Naive thymus-derived CD4-positive, alpha-beta T cell (primary cell): ENCODE measurements at regions of chrX and their contacts with region 1.

Region 1: GRCh38 chrX:134460005-134460861 is at the start of gene HPRT1:
- DNase-seq: peak; percentile 57 to 80 (median 72)
- ATAC-seq: peak; percentile 99
- H3K4me3 ChIP-seq: peak within 1 kb of the TSS; percentile 53
- H3K4me3 Mint-ChIP-seq: peak within 1 kb of the TSS; percentile 78 to 97 (median 91)
- H3K27ac ChIP-seq: peak within 1 kb of the TSS; percentile 80
- H3K27ac Mint-ChIP-seq: peak within 1 kb of the TSS in 8 of 9 donors; percentile 14 to 95 (median 84)
- H3K4me1 ChIP-seq: no peaks in the 10 kb centered on the region
- H3K4me1 Mint-ChIP-seq: peaks cover 0 to 20% (median 10%) of the 10 kb centered on the region in 7 donors
- H3K27me3 ChIP-seq: no peaks in the 10 kb centered on the region
- H3K27me3 Mint-ChIP-seq: no peaks in the 10 kb centered on the region
- total RNA-seq, gene HPRT1: 13.6 to 73.7 (median 14.9) TPM

Region 2: GRCh38 chrX:134642386-134642785 is 182.2 kb after region 1 on chrX:
- CTCF ChIA-PET with region 1: no interaction called
- POLR2A ChIA-PET with region 1: no interaction called
- intact Hi-C with region 1: no loop called
- DNase-seq: no peak
- ATAC-seq: no peak
- H3K4me3 ChIP-seq: no peak overlapping the region
- H3K4me3 Mint-ChIP-seq: no peak overlapping the region
- H3K27ac ChIP-seq: no peak overlapping the region
- H3K27ac Mint-ChIP-seq: no peak overlapping the region
- H3K4me1 ChIP-seq: no peaks in the 10 kb centered on the region
- H3K4me1 Mint-ChIP-seq: no peaks in the 10 kb centered on the region
- H3K27me3 ChIP-seq: no peaks in the 10 kb centered on the region
- H3K27me3 Mint-ChIP-seq: peaks cover 6 to 15% (median 13%) of the 10 kb centered on the region in 5 donors

Region 3: GRCh38 chrX:134807039-134807731 is 347.0 kb after region 1 on chrX:
- CTCF ChIA-PET with region 1: no interaction called
- POLR2A ChIA-PET with region 1: no interaction called
- intact Hi-C with region 1: loop called in 1 of 2 experiments (anchors 10 kb)
- DNase-seq: peak; percentile 56 to 91 (median 85)
- ATAC-seq: peak; percentile 93
- H3K4me3 ChIP-seq: peak overlapping the region; percentile 79
- H3K4me3 Mint-ChIP-seq: peak overlapping the region; percentile 89 to 99 (median 95)
- H3K27ac ChIP-seq: peak overlapping the region; percentile 94
- H3K27ac Mint-ChIP-seq: peak overlapping the region; percentile 87 to 100 (median 97)
- H3K4me1 ChIP-seq: peaks cover 4% of the 10 kb centered on the region in 2 donors
- H3K4me1 Mint-ChIP-seq: peaks cover 8 to 39% (median 27%) of the 10 kb centered on the region in 7 donors
- H3K27me3 ChIP-seq: no peaks in the 10 kb centered on the region
- H3K27me3 Mint-ChIP-seq: peaks cover 0 to 2% (median 0%) of the 10 kb centered on the region in 5 donors

Region 4: DNA sequence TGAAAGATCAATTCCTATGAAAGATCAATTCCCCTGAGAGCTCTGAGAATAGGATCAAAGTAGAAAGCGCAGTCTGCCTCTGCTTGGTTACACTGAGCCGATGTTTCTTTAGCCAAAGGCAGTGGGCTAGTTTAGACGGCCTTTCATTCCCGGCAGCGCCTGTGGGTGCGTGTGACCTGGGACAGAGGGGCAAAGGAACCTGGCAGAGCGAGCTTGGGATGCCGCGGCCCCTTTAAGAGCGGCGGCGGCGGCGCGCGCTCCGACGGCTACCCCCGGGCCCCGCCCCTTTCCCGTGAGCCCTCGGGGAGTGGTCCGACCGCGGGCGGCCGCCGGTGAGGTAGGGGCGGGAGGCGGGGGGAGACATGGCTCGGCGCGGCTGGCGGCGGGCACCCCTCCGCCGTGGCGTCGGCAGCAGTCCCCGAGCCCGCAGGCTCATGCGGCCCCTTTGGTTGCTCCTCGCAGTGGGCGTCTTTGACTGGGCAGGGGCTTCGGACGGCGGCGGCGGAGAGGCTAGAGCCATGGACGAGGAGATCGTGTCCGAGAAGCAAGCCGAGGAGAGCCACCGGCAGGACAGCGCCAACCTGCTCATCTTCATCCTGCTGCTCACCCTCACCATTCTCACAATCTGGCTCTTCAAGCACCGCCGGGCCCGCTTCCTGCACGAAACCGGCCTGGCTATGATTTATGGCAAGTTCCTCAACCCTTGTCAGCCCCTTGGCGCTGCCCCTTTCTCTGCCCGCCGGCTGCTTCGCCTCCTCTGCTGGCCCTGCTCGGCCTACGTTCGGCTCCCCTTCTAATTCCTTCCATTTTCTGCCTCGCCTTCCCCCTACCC is 1525.1 kb after region 1 on chrX and contains the start of gene SLC9A6:
- CTCF ChIA-PET with region 1: no interaction called
- POLR2A ChIA-PET with region 1: no interaction called
- intact Hi-C with region 1: loop called in 1 of 2 experiments (anchors 10 kb)
- DNase-seq: peak; percentile 26 to 75 (median 52)
- ATAC-seq: peak; percentile 96
- H3K4me3 ChIP-seq: peak within 1 kb of the TSS; percentile 73
- H3K4me3 Mint-ChIP-seq: peak within 1 kb of the TSS; percentile 79 to 95 (median 92)
- H3K27ac ChIP-seq: peak within 1 kb of the TSS; percentile 76
- H3K27ac Mint-ChIP-seq: peak within 1 kb of the TSS; percentile 80 to 99 (median 93)
- H3K4me1 ChIP-seq: peaks cover 20 to 23% of the 10 kb centered on the region in 2 donors
- H3K4me1 Mint-ChIP-seq: peaks cover 40 to 78% (median 61%) of the 10 kb centered on the region in 7 donors
- H3K27me3 ChIP-seq: no peaks in the 10 kb centered on the region
- H3K27me3 Mint-ChIP-seq: no peaks in the 10 kb centered on the region
- total RNA-seq, gene SLC9A6: 16.2 to 21.1 (median 18.9) TPM